A673 (cell line): ENCODE measurements at regions of chr11 and their contacts with region 1.

Region 1: DNA sequence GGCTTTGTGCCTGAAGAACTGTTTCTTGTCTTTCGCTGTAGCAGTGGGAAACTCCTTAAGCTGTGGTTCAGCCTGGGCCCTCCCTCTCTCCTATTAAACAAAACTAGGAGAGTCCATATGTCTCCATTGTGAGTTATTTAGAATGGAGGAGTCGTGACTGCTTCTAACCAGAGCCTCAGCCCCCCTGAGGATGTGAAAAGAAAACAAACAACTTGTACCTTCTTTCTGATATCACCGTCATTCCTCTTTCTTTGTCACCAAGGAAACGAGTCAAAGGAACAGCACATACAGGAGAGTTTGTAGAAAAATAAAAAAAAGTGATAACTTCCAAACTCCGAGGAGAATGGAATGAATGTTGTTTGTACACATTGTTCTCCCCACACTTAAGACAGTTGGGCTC is 11.6 kb upstream of the EXT2 start:
- DNase-seq: no peak
- H3K4me3 ChIP-seq: no peak overlapping the region
- H3K27ac ChIP-seq: no peak overlapping the region
- H3K4me1 ChIP-seq: no peaks in the 10 kb centered on the region
- H3K27me3 ChIP-seq: no peaks in the 10 kb centered on the region
- CTCF ChIP-seq: no peak

Region 2: GRCh38 chr11:44095506-44096394 is 11.8 kb after region 1 on chr11 and contains the start of gene EXT2:
- CTCF ChIA-PET with region 1: interaction called, 21 read pairs
- POLR2A ChIA-PET with region 1: no interaction called
- intact Hi-C with region 1: no loop called
- DNase-seq: peak; percentile 95
- H3K4me3 ChIP-seq: peak within 1 kb of the TSS; percentile 66
- H3K27ac ChIP-seq: peak within 1 kb of the TSS; percentile 72
- H3K4me1 ChIP-seq: peaks cover 16% of the 10 kb centered on the region
- H3K27me3 ChIP-seq: no peaks in the 10 kb centered on the region
- CTCF ChIP-seq: peak; percentile 100
- total RNA-seq, gene EXT2: 123 and 128 TPM in 2 replicates